ENCODE measurements at regions of chr1 and their contacts with region 1.

Region 1: GRCh38 chr1:54800899-54801759 is at the start of gene TTC22:
- DNase-seq: peak; percentile 76
- H3K4me3 ChIP-seq: peak within 1 kb of the TSS; percentile 29 to 55 (median 50)
- H3K27ac ChIP-seq: peak within 1 kb of the TSS in 3 of 4 donors; percentile 37 to 68 (median 54)
- H3K4me1 ChIP-seq: peaks cover 0 to 31% (median 19%) of the 10 kb centered on the region in 4 donors
- H3K27me3 ChIP-seq: peaks cover 0 to 25% (median 0%) of the 10 kb centered on the region in 3 donors
- CTCF ChIP-seq: peak in 2 of 4 experiments; percentile 49 to 50
- EP300 ChIP-seq: no peak
- POLR2A ChIP-seq: peak in 1 of 2 donors; percentile 17
- total RNA-seq, gene TTC22: 0.81 to 1.9 (median 0.95) TPM

Region 2: DNA sequence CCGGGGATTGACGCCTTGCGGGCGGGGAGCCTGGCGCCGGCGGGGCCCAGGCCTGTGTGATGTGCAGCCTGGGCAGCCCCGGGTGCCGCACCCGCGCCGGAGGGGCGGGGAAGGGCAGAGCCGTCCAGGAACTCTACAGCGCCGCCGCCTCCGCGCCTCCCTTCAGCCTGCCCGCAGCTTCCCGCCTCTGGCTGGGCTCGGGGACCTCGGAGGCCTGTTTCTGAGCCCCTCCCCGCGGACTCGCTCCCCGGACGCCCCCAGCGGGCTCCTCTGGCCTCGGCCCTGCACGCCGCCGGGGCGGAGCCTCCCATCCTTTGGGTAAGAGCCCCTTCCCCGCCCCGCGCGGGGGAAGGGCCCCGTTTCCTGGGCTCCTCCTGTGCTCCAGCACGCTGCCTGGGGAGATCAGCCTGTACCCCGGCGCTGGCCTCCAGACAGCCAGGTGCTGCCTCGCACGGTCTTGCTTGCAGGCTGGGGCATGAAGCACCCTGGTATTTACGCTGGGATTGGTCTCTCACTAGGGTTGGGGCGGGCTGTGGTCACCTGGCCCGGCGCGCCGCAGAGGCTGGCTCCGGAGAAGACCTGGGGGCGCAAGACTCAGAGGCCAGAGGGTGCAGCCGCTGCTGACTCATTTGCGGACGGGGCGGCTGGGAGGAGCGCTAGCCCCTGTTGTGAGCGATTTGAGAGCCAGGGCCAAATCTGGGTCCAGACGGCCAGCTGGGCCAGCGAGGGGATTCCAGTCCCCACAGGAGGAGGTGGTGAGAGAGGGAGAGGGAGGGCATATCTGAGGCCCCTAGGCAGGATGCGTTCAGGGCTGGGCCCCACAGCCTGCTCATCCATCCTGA is 258.8 kb before region 1 on chr1:
- intact Hi-C with region 1: loop called (anchors 1 kb)
- DNase-seq: peak; percentile 78
- H3K4me3 ChIP-seq: peak overlapping the region; percentile 36 to 62 (median 52)
- H3K27ac ChIP-seq: peak overlapping the region; percentile 85 to 91 (median 86)
- H3K4me1 ChIP-seq: peaks cover 0 to 39% (median 38%) of the 10 kb centered on the region in 4 donors
- H3K27me3 ChIP-seq: no peaks in the 10 kb centered on the region
- CTCF ChIP-seq: peak in 1 of 4 experiments; percentile 21
- EP300 ChIP-seq: no peak
- POLR2A ChIP-seq: no peak

Region 3: DNA sequence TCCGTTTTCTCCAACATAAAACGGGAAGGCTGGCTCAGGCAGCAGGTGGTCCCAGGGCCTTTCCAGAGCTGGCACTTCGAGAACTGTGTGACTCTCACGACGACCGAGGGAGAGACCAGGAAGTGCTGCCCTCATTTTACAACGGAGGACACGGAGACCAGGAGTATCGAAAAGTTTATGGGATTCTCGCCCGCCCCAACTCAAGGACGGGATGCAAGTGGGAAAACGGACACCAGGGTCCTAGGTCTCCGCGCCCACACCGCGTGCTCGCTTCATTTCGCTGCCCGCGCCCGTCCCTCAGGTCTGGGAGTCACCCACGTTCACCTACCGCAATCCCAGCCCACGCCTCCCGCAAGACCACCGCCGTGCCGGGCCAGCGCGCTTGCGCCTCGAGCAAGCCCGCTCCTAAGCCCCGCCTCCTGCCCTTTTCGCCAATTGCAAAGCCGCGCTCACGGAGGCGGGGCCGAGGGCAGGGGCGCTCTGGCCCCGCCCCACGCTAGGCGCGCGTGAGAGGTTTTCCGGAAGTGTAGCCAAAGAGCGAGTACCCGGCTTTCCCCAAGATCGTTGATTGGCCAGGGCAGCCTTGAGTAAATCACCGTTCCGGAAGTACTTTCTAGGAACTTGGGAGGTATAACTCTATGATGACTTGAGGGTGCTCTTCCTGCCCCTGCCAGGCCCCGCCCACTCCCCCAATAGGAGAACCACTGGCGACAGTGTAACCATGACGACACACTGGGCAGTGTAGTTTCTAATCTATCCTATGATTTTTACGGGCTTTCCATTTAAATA is 36.8 kb before region 1 on chr1 and contains the start of gene PARS2:
- intact Hi-C with region 1: loop called (anchors 5 kb)
- DNase-seq: peak; percentile 99
- H3K4me3 ChIP-seq: peak within 1 kb of the TSS; percentile 69 to 88 (median 81)
- H3K27ac ChIP-seq: peak within 1 kb of the TSS; percentile 73 to 84 (median 78)
- H3K4me1 ChIP-seq: peaks cover 0 to 17% (median 12%) of the 10 kb centered on the region in 4 donors
- H3K27me3 ChIP-seq: no peaks in the 10 kb centered on the region
- CTCF ChIP-seq: no peak
- EP300 ChIP-seq: peak in 1 of 4 donors; percentile 64
- POLR2A ChIP-seq: peak; percentile 67 to 73
- total RNA-seq, gene PARS2: 3.3 to 5.7 (median 4.9) TPM